Activated B cell treated with CpG ODN at 0.5 μM for 24 hours (primary cell): ENCODE measurements at regions of chr11 and their contacts with region 1.

Region 1: GRCh38 chr11:64810271-64810890 is at the start of gene MEN1:
- DNase-seq: peak; percentile 78
- ATAC-seq: peak; percentile 87
- H3K4me3 Mint-ChIP-seq: peak within 1 kb of the TSS; percentile 96
- H3K27ac Mint-ChIP-seq: peak within 1 kb of the TSS; percentile 85
- H3K4me1 Mint-ChIP-seq: peaks cover 36% of the 10 kb centered on the region
- H3K27me3 Mint-ChIP-seq: no peaks in the 10 kb centered on the region
- CTCF ChIP-seq: no peak
- total RNA-seq, gene MEN1: 35.1 and 44.6 TPM in 2 replicates

Region 2: GRCh38 chr11:64793271-64794172 is 16.9 kb before region 1 on chr11:
- CTCF ChIA-PET with region 1: no interaction called
- POLR2A ChIA-PET with region 1: no interaction called
- intact Hi-C with region 1: no loop called
- DNase-seq: no peak
- ATAC-seq: no peak
- H3K4me3 Mint-ChIP-seq: no peak overlapping the region
- H3K27ac Mint-ChIP-seq: peak overlapping the region; percentile 69
- H3K4me1 Mint-ChIP-seq: peaks cover 23% of the 10 kb centered on the region
- H3K27me3 Mint-ChIP-seq: no peaks in the 10 kb centered on the region
- CTCF ChIP-seq: no peak

Region 3: GRCh38 chr11:64924102-64924851 is 113.9 kb after region 1 on chr11 and contains the start of gene PPP2R5B:
- CTCF ChIA-PET with region 1: no interaction called
- POLR2A ChIA-PET with region 1: no interaction called
- intact Hi-C with region 1: loop called (anchors 1 kb)
- DNase-seq: peak; percentile 83
- ATAC-seq: peak; percentile 95
- H3K4me3 Mint-ChIP-seq: peak within 1 kb of the TSS; percentile 93
- H3K27ac Mint-ChIP-seq: peak within 1 kb of the TSS; percentile 96
- H3K4me1 Mint-ChIP-seq: peaks cover 27% of the 10 kb centered on the region
- H3K27me3 Mint-ChIP-seq: no peaks in the 10 kb centered on the region
- CTCF ChIP-seq: no peak
- total RNA-seq, gene PPP2R5B: 12.0 and 12.6 TPM in 2 replicates